Caco-2 (cell line): ENCODE measurements at regions of chr12 and their contacts with region 1.

Region 1: DNA sequence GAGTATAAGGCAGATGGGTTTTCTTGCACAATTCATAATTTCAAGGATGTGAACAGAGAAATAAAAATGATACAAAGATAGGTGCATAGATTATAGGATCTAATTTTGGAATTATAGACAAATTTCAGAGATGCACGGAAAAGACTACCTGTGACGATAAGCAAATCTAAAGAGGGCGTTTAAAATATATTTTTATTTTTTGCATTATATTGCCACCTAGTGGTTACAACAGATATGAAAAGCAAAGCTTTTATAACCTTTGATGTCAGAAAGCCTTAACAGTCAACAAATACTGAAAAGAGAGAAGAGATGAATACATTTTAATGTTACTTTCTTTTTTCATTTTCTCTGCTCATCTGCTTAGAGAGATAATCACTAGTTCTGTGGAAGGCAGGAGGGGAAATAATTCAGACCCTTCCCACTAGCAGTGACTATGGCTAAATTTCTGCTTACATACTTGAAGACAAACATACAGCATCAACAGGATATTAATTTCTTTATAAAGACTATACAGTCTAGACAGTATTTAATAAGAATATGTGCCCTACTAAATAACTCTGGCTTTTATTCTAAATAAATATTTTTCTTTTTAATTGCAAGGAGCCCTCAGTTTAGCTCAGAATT is 46.3 kb downstream of the NTS start:
- DNase-seq: no peak
- H3K4me3 ChIP-seq: no peak overlapping the region
- H3K4me3 Mint-ChIP-seq: no peak overlapping the region
- H3K27ac Mint-ChIP-seq: no peak overlapping the region
- H3K4me1 ChIP-seq: no peaks in the 10 kb centered on the region
- H3K4me1 Mint-ChIP-seq: no peaks in the 10 kb centered on the region
- H3K27me3 ChIP-seq: no peaks in the 10 kb centered on the region
- H3K27me3 Mint-ChIP-seq: no peaks in the 10 kb centered on the region
- CTCF ChIP-seq: peak; percentile 36 to 61

Region 2: DNA sequence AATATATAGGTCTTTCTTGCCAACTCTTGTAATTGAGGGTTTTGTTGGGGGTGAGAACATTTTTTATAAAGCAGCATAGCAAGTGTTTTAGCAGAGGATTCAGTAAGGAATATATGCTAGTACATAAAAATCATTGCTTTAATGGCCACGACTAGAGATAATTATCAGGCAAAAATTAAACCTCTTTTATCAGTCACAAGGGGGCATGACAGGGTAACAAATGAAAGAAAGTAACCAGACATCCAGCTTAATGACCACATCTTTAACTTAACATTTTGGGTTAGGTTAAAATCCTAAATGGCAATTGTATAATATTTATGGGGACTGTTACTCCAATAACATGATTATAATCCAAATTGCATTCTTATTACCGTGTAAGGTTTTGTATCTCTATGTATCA is 764.6 kb before region 1 on chr12:
- CTCF ChIA-PET with region 1: no interaction called
- POLR2A ChIA-PET with region 1: no interaction called
- intact Hi-C with region 1: loop called (anchors 2 kb)
- DNase-seq: no peak
- H3K4me3 ChIP-seq: no peak overlapping the region
- H3K4me3 Mint-ChIP-seq: no peak overlapping the region
- H3K27ac Mint-ChIP-seq: no peak overlapping the region
- H3K4me1 ChIP-seq: no peaks in the 10 kb centered on the region
- H3K4me1 Mint-ChIP-seq: no peaks in the 10 kb centered on the region
- H3K27me3 ChIP-seq: no peaks in the 10 kb centered on the region
- H3K27me3 Mint-ChIP-seq: no peaks in the 10 kb centered on the region
- CTCF ChIP-seq: peak; percentile 11 to 16

Region 3: DNA sequence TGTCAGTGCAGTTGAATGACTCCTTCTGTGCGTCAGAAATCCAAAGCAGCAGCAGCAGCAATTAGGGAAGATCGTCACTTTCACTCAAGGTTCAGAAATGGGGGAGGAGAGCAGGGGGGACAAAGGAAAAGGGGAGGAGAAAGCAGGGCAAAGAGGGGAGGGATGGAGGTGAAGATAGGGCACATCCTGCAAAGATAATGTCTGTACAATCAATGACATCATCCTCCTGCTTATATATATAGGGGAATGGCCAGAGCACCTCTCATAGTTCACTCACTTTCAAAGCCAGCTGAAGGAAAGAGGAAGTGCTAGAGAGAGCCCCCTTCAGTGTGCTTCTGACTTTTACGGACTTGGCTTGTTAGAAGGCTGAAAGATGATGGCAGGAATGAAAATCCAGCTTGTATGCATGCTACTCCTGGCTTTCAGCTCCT is 46.4 kb before region 1 on chr12 and contains the start of gene NTS:
- CTCF ChIA-PET with region 1: no interaction called
- POLR2A ChIA-PET with region 1: no interaction called
- intact Hi-C with region 1: no loop called
- DNase-seq: no peak
- H3K4me3 ChIP-seq: no peak within 1 kb of the TSS
- H3K4me3 Mint-ChIP-seq: no peak within 1 kb of the TSS
- H3K27ac Mint-ChIP-seq: no peak within 1 kb of the TSS
- H3K4me1 ChIP-seq: no peaks in the 10 kb centered on the region
- H3K4me1 Mint-ChIP-seq: no peaks in the 10 kb centered on the region
- H3K27me3 ChIP-seq: no peaks in the 10 kb centered on the region
- H3K27me3 Mint-ChIP-seq: peaks cover 5% of the 10 kb centered on the region
- CTCF ChIP-seq: no peak
- total RNA-seq, gene NTS: 0.58 TPM in 1 of 2 replicates, not detected in the other

Region 4: DNA sequence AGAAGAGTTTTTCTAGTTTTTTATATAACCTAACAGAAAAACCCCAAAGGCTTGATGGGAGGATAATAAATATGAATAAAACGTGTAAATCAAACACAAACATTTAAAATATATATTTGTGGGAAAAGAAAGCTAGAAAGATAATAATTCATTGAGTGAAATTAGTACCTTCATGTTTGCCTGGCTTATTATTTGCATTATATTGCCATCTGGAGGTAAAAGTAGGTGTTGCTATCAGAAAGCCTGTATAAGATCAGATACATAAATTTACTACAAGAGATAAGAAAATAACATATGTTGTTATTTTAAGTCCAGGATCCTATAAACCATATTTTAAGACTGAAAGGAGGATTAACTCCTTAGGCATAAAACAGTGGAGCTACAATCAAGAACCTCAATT is 31.4 kb after region 1 on chr12:
- CTCF ChIA-PET with region 1: no interaction called
- POLR2A ChIA-PET with region 1: no interaction called
- intact Hi-C with region 1: loop called (anchors 1 kb)
- DNase-seq: peak in 1 of 2 experiments; percentile 5
- H3K4me3 ChIP-seq: no peak overlapping the region
- H3K4me3 Mint-ChIP-seq: no peak overlapping the region
- H3K27ac Mint-ChIP-seq: no peak overlapping the region
- H3K4me1 ChIP-seq: no peaks in the 10 kb centered on the region
- H3K4me1 Mint-ChIP-seq: no peaks in the 10 kb centered on the region
- H3K27me3 ChIP-seq: no peaks in the 10 kb centered on the region
- H3K27me3 Mint-ChIP-seq: peaks cover 2% of the 10 kb centered on the region
- CTCF ChIP-seq: peak; percentile 14 to 37

Region 5: GRCh38 chr12:86985298-86985697 is 1064.9 kb after region 1 on chr12:
- CTCF ChIA-PET with region 1: no interaction called
- POLR2A ChIA-PET with region 1: no interaction called
- intact Hi-C with region 1: no loop called
- DNase-seq: no peak
- H3K4me3 ChIP-seq: no peak overlapping the region
- H3K4me3 Mint-ChIP-seq: no peak overlapping the region
- H3K27ac Mint-ChIP-seq: no peak overlapping the region
- H3K4me1 ChIP-seq: no peaks in the 10 kb centered on the region
- H3K4me1 Mint-ChIP-seq: no peaks in the 10 kb centered on the region
- H3K27me3 ChIP-seq: no peaks in the 10 kb centered on the region
- H3K27me3 Mint-ChIP-seq: peaks cover under 1% of the 10 kb centered on the region
- CTCF ChIP-seq: no peak